Dendritic cell treated with granulocyte-macrophage colony-stimulating factor and Interleukin-4, amounts not matched to agents 40 ng/mL and 50 ng/mL, for 4 days (primary cell): ENCODE measurements at regions of chr9 and their contacts with region 1.

Region 1: GRCh38 chr9:4762108-4762885 is 21.3 kb upstream of the AK3 start:
- H3K4me3 Mint-ChIP-seq: peak overlapping the region; percentile 54
- H3K27ac Mint-ChIP-seq: peak overlapping the region; percentile 39
- H3K4me1 Mint-ChIP-seq: peaks cover 52% of the 10 kb centered on the region
- H3K27me3 Mint-ChIP-seq: peaks cover 11% of the 10 kb centered on the region

Region 2: GRCh38 chr9:4792572-4793458 is 30.5 kb after region 1 on chr9 and contains the start of gene RCL1:
- intact Hi-C with region 1: loop called (anchors 2 kb)
- H3K4me3 Mint-ChIP-seq: peak within 1 kb of the TSS; percentile 90
- H3K27ac Mint-ChIP-seq: peak within 1 kb of the TSS; percentile 87
- H3K4me1 Mint-ChIP-seq: peaks cover 40% of the 10 kb centered on the region
- H3K27me3 Mint-ChIP-seq: peaks cover 21% of the 10 kb centered on the region

Region 3: DNA sequence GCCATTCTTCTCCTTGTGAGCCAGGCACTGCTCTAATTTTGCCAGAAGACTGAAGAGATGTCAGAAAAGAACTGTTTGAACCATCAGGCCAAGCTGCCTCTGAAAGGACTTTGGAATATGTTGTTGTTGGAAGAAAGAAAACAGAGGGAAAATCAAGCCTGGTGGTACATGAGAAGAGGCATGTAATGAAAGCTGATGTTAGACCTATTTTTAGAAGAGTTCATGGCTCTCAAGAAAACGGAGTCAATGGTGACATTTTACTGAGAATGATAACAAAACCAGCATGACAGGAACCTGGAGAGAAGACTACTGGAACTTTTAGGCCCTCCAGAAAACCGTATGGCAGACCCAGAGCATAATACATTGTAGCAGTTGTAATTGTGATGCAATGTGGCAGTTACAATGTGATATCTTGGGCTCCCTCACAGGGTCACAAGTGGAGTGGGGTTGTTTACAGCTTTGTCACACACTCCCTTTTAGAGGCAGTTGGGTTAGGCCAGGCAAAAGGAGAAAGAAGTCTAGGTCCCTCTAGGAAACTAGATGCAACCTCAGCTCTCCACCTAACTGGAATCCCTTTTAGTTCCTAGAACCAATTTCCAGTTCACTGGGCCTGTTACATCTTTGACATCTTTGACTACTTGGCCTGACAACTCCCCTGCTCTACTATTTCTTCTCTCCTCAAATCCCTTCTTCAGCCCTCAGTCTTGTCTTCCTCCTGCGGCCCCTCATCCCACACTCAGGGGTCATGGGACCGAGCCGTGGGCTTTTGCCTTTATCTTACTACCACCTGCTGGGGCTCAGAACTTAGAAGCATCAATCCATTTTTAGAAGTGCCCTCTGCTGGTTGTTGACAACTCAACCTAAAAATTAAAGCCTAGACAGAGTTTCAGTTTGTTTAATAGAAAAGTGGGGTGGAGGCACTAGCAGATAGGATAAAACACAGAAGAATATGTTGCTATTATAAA is 161.6 kb after region 1 on chr9:
- intact Hi-C with region 1: loop called (anchors 1 kb)
- H3K4me3 Mint-ChIP-seq: no peak overlapping the region
- H3K27ac Mint-ChIP-seq: no peak overlapping the region
- H3K4me1 Mint-ChIP-seq: peaks cover 20% of the 10 kb centered on the region
- H3K27me3 Mint-ChIP-seq: peaks cover 2% of the 10 kb centered on the region

Region 4: GRCh38 chr9:5442400-5443011 is 680.2 kb after region 1 on chr9:
- intact Hi-C with region 1: loop called (anchors 10 kb)
- H3K4me3 Mint-ChIP-seq: no peak overlapping the region
- H3K27ac Mint-ChIP-seq: peak overlapping the region; percentile 53
- H3K4me1 Mint-ChIP-seq: peaks cover 57% of the 10 kb centered on the region
- H3K27me3 Mint-ChIP-seq: no peaks in the 10 kb centered on the region

Region 5: DNA sequence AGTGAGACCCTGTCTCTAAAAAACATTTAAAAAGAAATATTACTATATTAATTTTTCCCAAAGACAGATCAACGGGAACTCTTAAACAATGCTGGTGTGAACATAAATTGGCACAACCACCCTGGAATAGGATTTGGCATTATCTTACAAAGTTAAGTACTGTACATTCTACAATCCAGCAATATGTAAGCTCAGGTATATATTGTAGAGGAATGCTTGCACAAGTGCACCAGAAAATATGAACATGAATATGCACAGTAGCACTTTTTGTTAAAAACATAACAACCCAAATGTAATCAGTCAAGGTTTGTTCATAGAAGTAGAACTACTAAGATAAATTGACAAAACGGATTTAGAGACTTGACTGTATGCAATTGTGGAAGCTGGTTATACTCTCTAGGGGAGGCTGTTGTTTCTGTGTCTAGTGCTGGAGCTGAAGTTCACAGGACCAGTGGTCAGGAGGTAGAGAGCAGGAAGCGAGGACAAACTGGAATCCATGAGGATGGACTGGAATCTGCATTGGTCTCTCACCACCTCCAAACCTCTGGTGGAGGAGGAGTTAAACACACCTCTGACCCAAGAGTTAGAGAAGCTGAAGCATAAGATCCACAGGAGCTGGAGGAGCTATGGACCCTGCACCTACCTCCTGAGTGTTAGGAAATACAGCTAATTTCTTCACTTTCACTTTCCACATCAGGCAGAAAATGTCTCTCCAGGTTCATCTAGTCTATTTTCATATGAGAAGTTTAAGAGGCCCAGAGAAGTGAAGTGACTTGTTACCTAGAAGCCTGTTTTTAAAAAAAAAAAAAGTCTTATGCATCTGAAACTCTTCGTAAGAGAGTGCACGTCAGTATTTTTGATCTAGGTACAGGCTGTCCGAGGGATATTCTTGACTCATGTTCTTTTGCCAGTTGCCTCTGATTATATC is 846.3 kb after region 1 on chr9:
- intact Hi-C with region 1: loop called (anchors 5 kb)
- H3K4me3 Mint-ChIP-seq: peak overlapping the region; percentile 76
- H3K27ac Mint-ChIP-seq: peak overlapping the region; percentile 18
- H3K4me1 Mint-ChIP-seq: peaks cover 15% of the 10 kb centered on the region
- H3K27me3 Mint-ChIP-seq: no peaks in the 10 kb centered on the region